MCF 10A (cell line): ENCODE measurements at regions of chr7 and their contacts with region 1.

Region 1: GRCh38 chr7:76020031-76020714 is 25.8 kb upstream of the TMEM120A start:
- DNase-seq: peak; percentile 74
- H3K4me3 Mint-ChIP-seq: no peak overlapping the region
- H3K27ac Mint-ChIP-seq: no peak overlapping the region
- H3K4me1 Mint-ChIP-seq: no peaks in the 10 kb centered on the region
- H3K27me3 Mint-ChIP-seq: no peaks in the 10 kb centered on the region
- CTCF ChIP-seq: peak; percentile 81

Region 2: GRCh38 chr7:75762314-75762917 is 257.8 kb before region 1 on chr7:
- CTCF ChIA-PET with region 1: interaction called, 10 read pairs
- POLR2A ChIA-PET with region 1: no interaction called
- intact Hi-C with region 1: no loop called
- DNase-seq: peak; percentile 69
- H3K4me3 Mint-ChIP-seq: no peak overlapping the region
- H3K27ac Mint-ChIP-seq: no peak overlapping the region
- H3K4me1 Mint-ChIP-seq: peaks cover 6% of the 10 kb centered on the region
- H3K27me3 Mint-ChIP-seq: no peaks in the 10 kb centered on the region
- CTCF ChIP-seq: peak; percentile 77

Region 3: DNA sequence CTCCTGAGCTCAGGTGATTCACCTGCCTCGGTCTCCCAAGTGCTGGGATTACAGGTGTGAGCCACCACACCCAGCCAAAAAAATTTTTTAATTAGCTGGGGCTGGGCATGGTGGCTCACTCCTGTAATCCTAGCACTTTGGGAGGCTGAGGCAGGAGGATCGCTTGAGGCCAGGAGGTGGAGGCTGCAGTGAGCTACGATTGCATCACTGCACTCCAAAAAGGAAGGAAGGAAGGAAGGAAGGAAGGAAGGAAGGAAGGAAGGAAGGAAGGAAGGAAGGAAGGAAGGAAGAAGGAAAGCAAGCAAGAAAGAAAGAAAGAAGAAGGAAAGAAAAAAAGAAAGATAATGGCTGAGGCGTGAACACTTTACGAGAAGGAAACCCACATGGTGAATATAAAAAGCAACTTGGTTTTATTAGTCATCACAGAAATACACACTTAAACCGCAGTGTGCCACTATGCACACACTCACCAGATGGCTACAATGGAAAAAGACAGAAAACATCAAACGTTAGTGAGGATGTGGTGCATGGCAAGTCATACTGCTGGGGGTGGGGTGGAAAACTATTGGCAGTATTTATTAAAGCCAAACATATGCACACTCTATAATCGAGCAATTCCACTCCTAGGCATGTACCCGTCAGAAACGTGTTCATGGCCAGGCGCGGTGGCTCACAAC is 243.7 kb before region 1 on chr7:
- CTCF ChIA-PET with region 1: interaction called, 4 read pairs
- POLR2A ChIA-PET with region 1: no interaction called
- intact Hi-C with region 1: loop called (anchors 1 kb)
- DNase-seq: peak; percentile 59
- H3K4me3 Mint-ChIP-seq: no peak overlapping the region
- H3K27ac Mint-ChIP-seq: no peak overlapping the region
- H3K4me1 Mint-ChIP-seq: peaks cover 12% of the 10 kb centered on the region
- H3K27me3 Mint-ChIP-seq: peaks cover 26% of the 10 kb centered on the region
- CTCF ChIP-seq: peak; percentile 17

Region 4: GRCh38 chr7:75814407-75814947 is 205.7 kb before region 1 on chr7:
- CTCF ChIA-PET with region 1: no interaction called
- POLR2A ChIA-PET with region 1: no interaction called
- intact Hi-C with region 1: no loop called
- DNase-seq: no peak
- H3K4me3 Mint-ChIP-seq: no peak overlapping the region
- H3K27ac Mint-ChIP-seq: no peak overlapping the region
- H3K4me1 Mint-ChIP-seq: no peaks in the 10 kb centered on the region
- H3K27me3 Mint-ChIP-seq: no peaks in the 10 kb centered on the region
- CTCF ChIP-seq: no peak

Region 5: DNA sequence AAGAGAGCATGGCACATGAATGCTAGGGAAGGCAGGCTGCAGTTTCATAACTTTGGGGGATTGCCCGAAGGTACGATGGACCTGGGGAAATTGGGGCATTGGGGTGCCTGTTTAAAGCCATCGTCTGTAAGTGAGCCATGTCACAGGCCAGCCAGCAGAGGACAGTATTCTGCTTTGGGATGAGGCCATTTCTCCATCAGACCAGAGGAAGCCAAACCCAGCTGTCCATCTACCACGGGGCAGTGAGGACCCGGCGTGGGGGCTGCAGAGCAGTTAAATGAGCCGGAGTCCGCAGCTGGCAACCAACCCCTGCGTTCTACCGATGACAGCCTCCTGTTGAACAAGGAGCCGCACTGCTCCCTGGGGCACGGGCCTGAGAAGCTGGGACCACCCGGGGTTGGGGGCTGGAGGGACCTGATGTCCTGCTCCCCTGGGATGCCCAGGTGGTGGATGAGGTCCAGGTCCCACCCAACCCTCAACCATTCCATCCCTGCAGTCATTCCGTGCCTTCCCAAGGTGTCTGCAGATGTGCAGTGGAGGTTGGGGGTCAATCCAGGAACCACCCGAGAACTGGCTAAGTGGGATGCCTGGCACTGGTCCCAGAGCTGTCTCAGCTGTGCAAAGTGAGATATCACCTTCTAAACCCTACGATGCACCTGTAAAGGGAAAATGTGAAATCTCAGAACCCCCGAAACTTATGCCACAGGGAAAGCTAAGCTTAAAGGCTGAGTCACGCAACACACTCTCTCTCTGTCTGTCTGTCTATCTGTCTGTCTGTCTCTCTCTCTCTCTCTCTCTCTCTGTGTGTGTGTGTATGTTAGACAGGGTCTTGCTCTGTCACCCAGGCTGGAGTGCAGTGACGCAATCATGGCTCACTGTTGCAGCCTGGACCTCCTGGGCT is 153.4 kb before region 1 on chr7:
- CTCF ChIA-PET with region 1: interaction called, 45 read pairs
- POLR2A ChIA-PET with region 1: interaction called, 5 read pairs
- intact Hi-C with region 1: loop called (anchors 1 kb)
- DNase-seq: peak; percentile 76
- H3K4me3 Mint-ChIP-seq: no peak overlapping the region
- H3K27ac Mint-ChIP-seq: no peak overlapping the region
- H3K4me1 Mint-ChIP-seq: peaks cover 6% of the 10 kb centered on the region
- H3K27me3 Mint-ChIP-seq: no peaks in the 10 kb centered on the region
- CTCF ChIP-seq: peak; percentile 79

Region 6: GRCh38 chr7:76031964-76032363 is 11.8 kb after region 1 on chr7:
- CTCF ChIA-PET with region 1: interaction called, 10 read pairs
- POLR2A ChIA-PET with region 1: no interaction called
- intact Hi-C with region 1: no loop called
- DNase-seq: no peak
- H3K4me3 Mint-ChIP-seq: no peak overlapping the region
- H3K27ac Mint-ChIP-seq: no peak overlapping the region
- H3K4me1 Mint-ChIP-seq: no peaks in the 10 kb centered on the region
- H3K27me3 Mint-ChIP-seq: no peaks in the 10 kb centered on the region
- CTCF ChIP-seq: no peak

Region 7: DNA sequence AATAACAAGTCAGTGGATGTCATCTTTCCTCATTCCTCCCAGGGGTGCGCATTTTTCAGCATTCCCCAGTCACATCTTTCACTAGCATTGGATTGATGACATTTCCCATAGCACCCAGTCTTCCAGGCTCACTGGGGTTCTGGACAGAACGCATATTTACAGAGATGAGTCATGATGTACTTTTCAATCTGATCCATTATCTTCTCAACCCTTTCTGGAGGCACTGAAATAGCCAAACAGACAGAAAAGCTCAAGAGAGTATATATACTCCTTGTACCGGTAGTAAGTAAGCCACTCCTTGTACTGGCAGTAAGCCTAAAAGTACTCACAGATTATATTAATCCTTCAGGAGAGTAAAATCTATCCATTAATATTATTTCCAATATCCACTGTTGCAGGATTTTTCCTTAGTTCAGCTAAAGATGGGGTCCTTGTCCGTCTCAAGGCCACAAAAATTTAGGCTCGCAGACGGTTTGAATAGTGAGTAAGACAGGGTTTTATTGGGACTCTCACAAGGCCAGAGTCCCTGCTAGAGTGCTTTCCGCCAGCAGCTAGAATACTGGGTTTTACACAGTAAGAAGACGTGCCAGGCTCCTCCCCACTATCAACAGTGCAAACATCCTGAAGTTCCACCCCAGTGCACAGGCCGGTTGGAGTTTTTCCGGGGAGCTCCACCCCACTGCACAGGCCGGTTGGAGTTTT is 88.5 kb after region 1 on chr7:
- CTCF ChIA-PET with region 1: no interaction called
- POLR2A ChIA-PET with region 1: no interaction called
- intact Hi-C with region 1: no loop called
- DNase-seq: no peak
- H3K4me3 Mint-ChIP-seq: no peak overlapping the region
- H3K27ac Mint-ChIP-seq: no peak overlapping the region
- H3K4me1 Mint-ChIP-seq: peaks cover 13% of the 10 kb centered on the region
- H3K27me3 Mint-ChIP-seq: no peaks in the 10 kb centered on the region
- CTCF ChIP-seq: no peak

Region 8: DNA sequence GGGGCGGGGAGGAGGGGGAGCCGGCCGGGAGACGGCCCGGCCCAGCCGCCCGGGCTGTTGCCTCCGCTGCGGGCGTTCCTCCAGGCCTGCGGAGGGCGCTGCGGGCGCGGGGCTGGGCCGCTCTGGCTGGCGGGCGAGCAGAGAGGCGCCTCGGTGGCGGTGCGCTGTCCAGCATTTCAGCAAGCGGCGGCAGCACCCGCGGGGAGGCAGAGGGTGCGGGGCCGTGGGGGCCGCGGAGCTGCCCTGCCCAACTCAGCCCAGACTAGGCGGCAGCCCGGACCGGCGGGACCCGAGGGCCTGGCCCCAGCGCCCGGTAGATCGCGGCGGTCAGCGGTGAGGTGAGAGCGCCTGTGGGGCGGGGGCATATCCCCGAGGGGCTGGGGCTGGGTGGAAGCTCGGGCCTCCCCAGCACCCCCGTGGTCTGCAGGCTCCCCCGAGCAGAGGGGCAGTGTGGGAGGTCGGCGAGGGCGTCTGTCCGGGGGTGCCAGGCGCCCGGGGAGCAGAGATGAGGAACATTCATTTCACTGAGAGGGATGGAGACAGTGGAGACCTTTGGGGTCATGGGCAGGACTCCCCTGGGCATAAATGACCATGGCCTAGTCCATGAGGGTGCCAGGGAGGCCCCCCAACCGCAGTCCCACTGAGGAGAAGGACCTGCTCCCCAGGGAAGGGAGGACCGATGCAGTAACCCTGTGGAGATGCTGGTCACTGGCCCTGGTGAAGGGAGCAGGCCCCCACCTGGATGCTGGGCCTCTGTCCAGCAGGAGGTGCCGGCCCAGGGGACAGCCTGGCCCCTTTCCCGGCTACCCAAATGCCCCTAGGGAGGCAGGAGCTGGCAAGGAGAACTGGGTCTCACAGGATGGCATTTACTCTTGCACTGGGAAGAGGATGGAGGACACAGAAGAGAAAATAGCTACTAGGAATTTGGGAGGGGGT is 181.8 kb after region 1 on chr7 and contains the start of gene SRRM3:
- CTCF ChIA-PET with region 1: no interaction called
- POLR2A ChIA-PET with region 1: no interaction called
- intact Hi-C with region 1: no loop called
- DNase-seq: peak; percentile 60
- H3K4me3 Mint-ChIP-seq: no peak within 1 kb of the TSS
- H3K27ac Mint-ChIP-seq: no peak within 1 kb of the TSS
- H3K4me1 Mint-ChIP-seq: no peaks in the 10 kb centered on the region
- H3K27me3 Mint-ChIP-seq: peaks cover 31% of the 10 kb centered on the region
- CTCF ChIP-seq: peak; percentile 75
- total RNA-seq, gene SRRM3: 0.70 and 0.71 TPM in 2 replicates